T-cell (primary cell): ENCODE measurements at regions of chr12 and their contacts with region 1.

Region 1: DNA sequence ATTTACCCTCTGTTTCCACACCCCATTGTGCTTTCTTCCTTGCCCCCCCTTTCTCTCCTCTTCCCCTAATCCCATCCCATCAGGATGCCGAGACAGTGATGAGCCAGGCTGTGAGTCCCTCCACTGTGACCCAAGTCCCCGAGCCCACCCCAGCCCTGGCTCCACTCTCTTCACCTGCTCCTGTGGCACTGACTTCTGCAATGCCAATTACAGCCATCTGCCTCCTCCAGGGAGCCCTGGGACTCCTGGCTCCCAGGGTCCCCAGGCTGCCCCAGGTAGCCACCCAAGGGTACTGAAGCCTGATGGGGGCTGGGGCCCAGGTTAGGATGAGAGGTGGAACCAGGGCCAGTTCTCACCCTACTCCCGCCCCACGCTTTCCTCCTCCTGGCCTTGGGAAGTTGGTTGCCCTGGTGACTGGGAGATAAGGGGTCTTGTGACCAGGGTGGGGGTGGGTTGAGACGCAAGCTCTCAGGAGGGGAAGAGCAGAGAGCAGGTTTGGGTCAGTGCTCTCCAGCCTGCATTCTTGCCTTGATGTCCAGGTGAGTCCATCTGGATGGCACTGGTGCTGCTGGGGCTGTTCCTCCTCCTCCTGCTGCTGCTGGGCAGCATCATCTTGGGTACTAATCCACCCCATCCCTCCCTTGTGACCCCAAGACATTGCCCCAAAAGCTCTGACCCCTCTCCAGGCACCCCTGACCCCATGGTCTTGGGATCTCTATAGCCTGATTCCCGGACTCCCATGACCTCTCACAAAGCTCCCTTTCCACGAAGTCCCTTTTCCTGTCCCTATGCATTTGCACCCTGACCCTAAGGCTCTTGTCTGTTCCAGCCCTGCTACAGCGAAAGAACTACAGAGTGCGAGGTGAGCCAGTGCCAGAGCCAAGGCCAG is 1.2 kb downstream of the AMHR2 start:
- DNase-seq: no peak
- ATAC-seq: no peak
- H3K4me3 ChIP-seq: no peak overlapping the region
- H3K4me3 Mint-ChIP-seq: no peak overlapping the region
- H3K27ac ChIP-seq: no peak overlapping the region
- H3K27ac Mint-ChIP-seq: no peak overlapping the region
- H3K4me1 ChIP-seq: peaks cover 0 to 5% of the 10 kb centered on the region in 2 experiments
- H3K4me1 Mint-ChIP-seq: peaks cover 8 to 13% (median 10%) of the 10 kb centered on the region in 3 donors
- H3K27me3 ChIP-seq: peaks cover 0 to 3% of the 10 kb centered on the region in 2 experiments
- H3K27me3 Mint-ChIP-seq: no peaks in the 10 kb centered on the region

Region 2: GRCh38 chr12:53332744-53333143 is 92.1 kb before region 1 on chr12:
- CTCF ChIA-PET with region 1: no interaction called
- POLR2A ChIA-PET with region 1: no interaction called
- DNase-seq: no peak
- ATAC-seq: no peak
- H3K4me3 ChIP-seq: no peak overlapping the region
- H3K4me3 Mint-ChIP-seq: no peak overlapping the region
- H3K27ac ChIP-seq: no peak overlapping the region
- H3K27ac Mint-ChIP-seq: no peak overlapping the region
- H3K4me1 ChIP-seq: peaks cover 0 to 4% of the 10 kb centered on the region in 2 experiments
- H3K4me1 Mint-ChIP-seq: peaks cover 2 to 5% (median 2%) of the 10 kb centered on the region in 3 donors
- H3K27me3 ChIP-seq: peaks cover 0 to 79% of the 10 kb centered on the region in 2 experiments
- H3K27me3 Mint-ChIP-seq: peaks cover 36 to 47% of the 10 kb centered on the region in 2 donors

Region 3: DNA sequence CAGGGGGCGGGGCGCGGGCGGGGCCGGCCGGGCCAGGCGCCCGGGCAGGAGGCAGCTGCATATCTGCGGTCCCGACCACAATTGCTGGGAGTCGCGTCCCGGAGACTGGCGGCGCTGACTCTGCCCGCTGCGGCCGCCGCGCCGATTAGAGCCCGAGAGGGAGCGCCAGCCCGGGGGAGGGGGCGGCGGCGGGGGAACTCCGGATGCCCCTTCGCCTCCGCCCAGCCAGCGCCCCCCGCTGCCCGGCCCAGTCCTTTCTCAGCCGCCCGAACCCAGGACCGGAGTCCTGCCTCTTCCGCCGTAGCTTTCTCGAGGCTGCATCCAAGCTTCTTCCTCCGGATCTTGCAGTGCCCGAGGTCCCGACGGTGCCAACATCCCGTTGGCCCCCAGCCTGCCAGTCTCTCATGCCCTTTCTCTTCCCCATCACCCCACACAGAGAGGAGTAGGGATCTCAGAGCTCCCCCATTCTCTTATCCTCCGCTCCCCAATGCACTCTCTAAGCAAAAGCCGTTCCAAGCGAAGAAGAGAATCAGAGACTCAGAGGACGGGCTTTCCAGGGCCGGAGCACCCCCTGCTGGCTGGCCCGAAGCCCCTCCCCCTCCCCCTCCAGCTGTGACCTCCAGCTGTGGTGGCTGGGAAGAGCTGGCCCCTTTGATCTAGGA is 79.9 kb before region 1 on chr12:
- CTCF ChIA-PET with region 1: interaction called in 1 of 2 experiments, 10 read pairs
- POLR2A ChIA-PET with region 1: no interaction called
- DNase-seq: peak; percentile 27 to 82 (median 56)
- ATAC-seq: peak; percentile 74 to 84 (median 84)
- H3K4me3 ChIP-seq: peak overlapping the region; percentile 55 to 61
- H3K4me3 Mint-ChIP-seq: peak overlapping the region; percentile 91 to 97 (median 91)
- H3K27ac ChIP-seq: peak overlapping the region; percentile 28
- H3K27ac Mint-ChIP-seq: peak overlapping the region; percentile 87 to 92
- H3K4me1 ChIP-seq: peaks cover 6 to 15% of the 10 kb centered on the region in 2 experiments
- H3K4me1 Mint-ChIP-seq: peaks cover 19 to 21% (median 20%) of the 10 kb centered on the region in 3 donors
- H3K27me3 ChIP-seq: peaks cover 0 to 5% of the 10 kb centered on the region in 2 experiments
- H3K27me3 Mint-ChIP-seq: peaks cover 0 to 3% of the 10 kb centered on the region in 2 donors

Region 4: GRCh38 chr12:53352331-53353256 is 72.3 kb before region 1 on chr12:
- CTCF ChIA-PET with region 1: interaction called, 17 to 54 read pairs
- POLR2A ChIA-PET with region 1: no interaction called
- DNase-seq: peak; percentile 60 to 95 (median 78)
- ATAC-seq: peak; percentile 95 to 99 (median 98)
- H3K4me3 ChIP-seq: no peak overlapping the region
- H3K4me3 Mint-ChIP-seq: no peak overlapping the region
- H3K27ac ChIP-seq: no peak overlapping the region
- H3K27ac Mint-ChIP-seq: peak overlapping the region in 1 of 2 donors; percentile 47
- H3K4me1 ChIP-seq: peaks cover 0 to 6% of the 10 kb centered on the region in 2 experiments
- H3K4me1 Mint-ChIP-seq: peaks cover 6 to 7% (median 6%) of the 10 kb centered on the region in 3 donors
- H3K27me3 ChIP-seq: no peaks in the 10 kb centered on the region
- H3K27me3 Mint-ChIP-seq: no peaks in the 10 kb centered on the region

Region 5: DNA sequence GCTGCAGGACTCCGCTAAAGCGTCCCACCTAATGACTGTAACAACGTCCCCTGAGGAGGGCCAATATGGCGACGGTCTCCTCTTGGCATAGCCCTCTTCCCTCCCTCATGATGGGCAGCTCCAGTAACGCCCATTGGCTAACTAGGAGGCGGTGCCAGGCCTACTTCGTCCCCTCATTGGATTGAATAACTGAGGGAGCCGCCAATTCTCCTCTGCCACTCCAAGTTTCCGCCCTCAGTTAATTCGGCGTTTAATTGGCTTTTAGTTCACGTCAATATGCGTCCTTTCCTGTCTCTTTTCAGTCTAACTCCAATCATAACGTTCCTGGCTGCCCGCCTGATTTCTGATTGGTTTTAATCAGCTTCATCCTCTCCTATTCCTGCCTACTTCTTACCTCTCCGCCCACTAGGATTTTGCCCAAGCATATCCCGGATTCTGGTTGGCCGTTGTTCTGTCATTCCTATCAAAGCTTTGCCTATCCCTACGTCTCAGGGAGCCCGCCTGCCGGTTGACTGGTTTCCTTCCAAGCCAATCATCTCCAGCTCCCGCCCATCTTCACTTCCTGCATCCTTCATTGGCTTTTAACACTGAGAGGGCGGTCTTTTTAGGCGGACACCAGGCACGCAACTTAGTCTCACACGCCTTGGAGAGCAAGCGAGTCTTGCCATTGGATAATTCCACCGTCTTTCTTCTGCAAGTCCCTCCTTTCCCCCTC is 45.3 kb before region 1 on chr12:
- CTCF ChIA-PET with region 1: interaction called, 4 to 16 read pairs
- POLR2A ChIA-PET with region 1: no interaction called
- DNase-seq: peak in 34 of 35 experiments; percentile 76 to 100 (median 98)
- ATAC-seq: peak; percentile 75 to 79 (median 76)
- H3K4me3 ChIP-seq: peak overlapping the region; percentile 51 to 65
- H3K4me3 Mint-ChIP-seq: no peak overlapping the region
- H3K27ac ChIP-seq: peak overlapping the region; percentile 64
- H3K27ac Mint-ChIP-seq: no peak overlapping the region
- H3K4me1 ChIP-seq: peaks cover 31 to 51% of the 10 kb centered on the region in 2 experiments
- H3K4me1 Mint-ChIP-seq: peaks cover 32 to 45% (median 38%) of the 10 kb centered on the region in 3 donors
- H3K27me3 ChIP-seq: no peaks in the 10 kb centered on the region
- H3K27me3 Mint-ChIP-seq: no peaks in the 10 kb centered on the region

Region 6: DNA sequence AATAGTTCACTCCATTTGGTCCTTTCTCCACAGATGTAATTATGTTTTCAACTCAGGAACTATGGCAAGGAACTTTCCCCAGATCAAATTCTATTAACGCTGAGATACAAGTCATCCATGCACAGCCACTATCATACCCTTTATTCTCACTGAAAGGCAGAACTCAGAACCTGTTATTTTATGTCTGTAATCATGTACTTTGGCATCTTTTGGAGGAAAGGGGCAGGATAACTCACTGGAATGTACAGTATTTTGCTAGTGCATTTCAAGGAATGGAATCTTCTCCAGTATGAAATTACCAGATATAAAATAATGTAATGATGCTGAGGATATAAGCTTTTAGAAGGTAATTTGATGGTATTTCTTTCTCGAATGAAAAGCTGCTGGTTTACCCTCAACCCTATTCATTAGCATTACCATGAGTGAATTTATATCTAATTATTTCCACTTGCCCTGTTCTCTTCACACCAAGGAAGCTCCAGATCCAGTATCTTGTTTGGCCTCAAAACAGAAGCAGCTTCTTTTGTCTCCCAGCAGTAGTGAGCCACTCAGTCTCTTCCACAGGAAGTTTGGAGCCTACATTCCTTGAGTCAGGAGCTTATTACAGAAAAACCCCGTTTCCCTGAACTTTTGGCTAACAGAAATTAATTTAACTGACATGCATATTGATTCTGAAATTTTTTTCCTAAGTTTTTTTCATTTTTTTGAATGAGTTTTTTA is 11.2 kb before region 1 on chr12:
- CTCF ChIA-PET with region 1: interaction called in 1 of 2 experiments, 10 read pairs
- POLR2A ChIA-PET with region 1: no interaction called
- DNase-seq: no peak
- ATAC-seq: no peak
- H3K4me3 ChIP-seq: no peak overlapping the region
- H3K4me3 Mint-ChIP-seq: no peak overlapping the region
- H3K27ac ChIP-seq: no peak overlapping the region
- H3K27ac Mint-ChIP-seq: peak overlapping the region; percentile 61 to 78
- H3K4me1 ChIP-seq: peaks cover 2 to 5% of the 10 kb centered on the region in 2 experiments
- H3K4me1 Mint-ChIP-seq: peaks cover 41 to 48% (median 43%) of the 10 kb centered on the region in 3 donors
- H3K27me3 ChIP-seq: no peaks in the 10 kb centered on the region
- H3K27me3 Mint-ChIP-seq: no peaks in the 10 kb centered on the region